Activated CD4-positive, alpha-beta memory T cell treated with anti-CD3 and anti-CD28 coated beads for 36 hours (primary cell): ENCODE measurements at regions of chr17 and their contacts with region 1.

Region 1: DNA sequence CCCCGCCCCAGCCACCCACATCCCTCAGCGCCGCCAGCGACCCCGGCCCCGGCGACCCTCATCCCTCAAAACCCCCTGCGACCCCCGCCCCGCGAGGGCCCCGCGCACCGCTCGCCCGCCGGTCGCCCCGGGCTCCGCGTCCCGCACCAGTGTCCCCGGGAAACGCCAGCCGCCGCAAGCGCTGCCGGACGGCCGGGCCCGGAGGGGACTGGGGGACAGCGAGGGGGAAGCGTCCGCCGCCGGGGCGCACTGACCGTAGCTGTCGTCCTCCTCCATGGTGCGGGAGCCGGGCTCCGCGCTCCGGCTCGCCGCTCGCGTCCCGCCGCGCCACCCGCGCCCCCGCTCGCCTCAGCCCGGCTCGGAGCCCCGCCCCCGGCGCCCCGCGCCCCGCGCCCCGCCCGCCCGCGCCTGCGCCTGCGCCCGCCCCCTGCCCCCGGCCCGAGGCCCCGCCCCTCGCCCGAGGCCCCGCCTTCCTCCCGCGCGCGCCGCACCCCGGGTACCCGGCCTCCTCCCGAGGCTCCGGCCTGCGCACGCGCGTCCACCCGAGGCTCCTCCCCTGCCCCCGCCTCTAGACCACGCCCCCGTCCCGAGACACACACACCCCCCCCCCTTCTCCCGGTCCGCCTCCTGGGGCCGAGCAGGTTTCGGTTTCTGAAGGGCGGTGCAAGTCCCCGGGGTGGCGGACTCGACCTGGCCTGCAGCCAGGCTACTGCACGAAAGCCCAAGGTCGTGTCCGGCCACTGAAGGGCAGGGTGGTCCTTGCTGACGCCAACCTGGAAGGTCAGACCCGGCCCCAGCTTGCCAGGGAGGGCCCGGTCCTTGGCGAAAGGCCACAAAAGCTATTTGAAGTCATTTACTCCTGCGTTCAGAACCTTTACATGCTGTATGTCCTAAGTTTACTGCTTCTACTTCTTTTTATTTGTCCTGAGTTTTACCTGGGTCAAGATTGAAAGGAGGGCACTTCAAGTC is at the start of gene CYTH1:
- DNase-seq: peak; percentile 98
- H3K4me3 Mint-ChIP-seq: peak within 1 kb of the TSS; percentile 90
- H3K27ac Mint-ChIP-seq: peak within 1 kb of the TSS; percentile 98
- H3K4me1 Mint-ChIP-seq: peaks cover 48% of the 10 kb centered on the region
- H3K27me3 Mint-ChIP-seq: no peaks in the 10 kb centered on the region
- total RNA-seq, gene CYTH1: 184 to 204 TPM

Region 2: DNA sequence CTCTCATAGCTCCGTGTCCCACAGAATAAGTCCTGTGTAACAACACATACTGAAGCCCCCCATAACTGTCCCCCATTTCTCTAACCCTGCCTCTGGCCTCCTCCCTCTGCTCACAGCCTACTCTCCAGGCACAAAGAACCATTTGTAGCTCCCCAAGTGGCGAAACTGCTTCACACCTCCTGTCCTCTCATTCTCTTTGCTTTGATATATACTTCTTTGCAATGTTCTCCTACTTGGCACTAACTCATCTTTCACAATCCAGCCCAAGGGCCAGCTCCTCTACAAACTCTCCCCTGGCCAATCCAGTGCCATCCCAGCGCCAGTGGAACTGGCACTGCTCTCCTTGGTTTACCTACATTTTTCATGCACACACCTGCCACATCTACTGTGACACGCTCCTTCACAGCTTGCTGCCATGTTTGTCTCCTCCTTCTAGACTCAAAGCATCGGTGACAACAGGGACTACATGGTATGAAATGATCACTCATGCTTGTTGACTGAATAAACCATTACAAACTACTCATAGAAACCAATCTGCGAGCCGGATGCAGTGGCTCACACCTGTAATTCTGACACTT is 12.9 kb before region 1 on chr17:
- CTCF ChIA-PET with region 1: interaction called, 4 read pairs
- POLR2A ChIA-PET with region 1: interaction called, 25 read pairs
- intact Hi-C with region 1: no loop called
- DNase-seq: peak; percentile 62
- H3K4me3 Mint-ChIP-seq: no peak overlapping the region
- H3K27ac Mint-ChIP-seq: no peak overlapping the region
- H3K4me1 Mint-ChIP-seq: peaks cover 42% of the 10 kb centered on the region
- H3K27me3 Mint-ChIP-seq: no peaks in the 10 kb centered on the region

Region 3: GRCh38 chr17:78798695-78799559 is 16.7 kb after region 1 on chr17:
- CTCF ChIA-PET with region 1: interaction called, 22 read pairs
- POLR2A ChIA-PET with region 1: interaction called, 14 read pairs
- intact Hi-C with region 1: no loop called
- DNase-seq: peak; percentile 49
- H3K4me3 Mint-ChIP-seq: no peak overlapping the region
- H3K27ac Mint-ChIP-seq: peak overlapping the region; percentile 86
- H3K4me1 Mint-ChIP-seq: peaks cover 52% of the 10 kb centered on the region
- H3K27me3 Mint-ChIP-seq: no peaks in the 10 kb centered on the region